GM23248 (cell line): ENCODE measurements at regions of chr22 and their contacts with region 1.

Region 1: DNA sequence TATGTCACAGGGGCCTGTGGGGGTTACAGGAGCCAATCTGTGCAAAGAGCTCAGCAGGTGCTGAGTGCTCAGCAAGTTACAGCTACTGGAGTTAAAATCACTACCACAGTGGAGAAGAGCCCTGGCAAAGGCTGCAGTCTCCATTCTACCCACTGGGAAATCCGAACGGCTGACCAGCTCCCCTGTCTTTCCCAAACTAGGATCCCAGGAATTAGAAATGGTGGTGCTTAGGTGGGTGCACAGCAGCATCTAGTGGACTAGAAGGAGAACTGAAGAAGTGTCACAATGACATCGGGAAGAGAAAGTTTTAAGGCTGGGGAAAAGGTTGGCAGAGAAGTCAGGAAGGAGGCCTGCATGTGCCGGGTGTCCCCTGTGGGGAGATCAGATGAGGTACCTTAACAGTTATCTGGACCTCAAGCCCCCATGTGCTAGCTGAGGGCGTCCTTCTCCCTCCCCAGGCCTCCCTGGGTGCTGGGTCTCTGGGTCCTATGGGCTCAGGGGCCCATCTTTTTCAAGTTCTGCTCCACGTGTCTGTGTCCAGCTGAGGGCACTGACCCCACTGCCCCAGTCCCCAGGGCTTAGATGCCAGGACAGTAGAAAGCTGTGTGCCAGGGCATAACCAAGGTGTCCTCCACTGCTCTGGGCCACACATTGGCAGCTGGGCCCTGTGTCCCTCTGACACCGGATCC is 1.9 kb downstream of the PIWIL3 start:
- DNase-seq: peak; percentile 51
- H3K4me3 ChIP-seq: no peak overlapping the region
- H3K27ac ChIP-seq: no peak overlapping the region
- H3K4me1 ChIP-seq: no peaks in the 10 kb centered on the region
- H3K27me3 ChIP-seq: 0 out of 2 replicates have a peak, but pooled peaks cover 6% of the 10 kb centered on the region

Region 2: GRCh38 chr22:24834845-24835570 is 62.4 kb after region 1 on chr22:
- in situ Hi-C with region 1: loop called (anchors 10 kb)
- DNase-seq: peak; percentile 52
- H3K4me3 ChIP-seq: no peak overlapping the region
- H3K27ac ChIP-seq: no peak overlapping the region
- H3K4me1 ChIP-seq: no peaks in the 10 kb centered on the region
- H3K27me3 ChIP-seq: no peaks in the 10 kb centered on the region